B cell (primary cell): ENCODE measurements at regions of chr11 and their contacts with region 1.

Region 1: DNA sequence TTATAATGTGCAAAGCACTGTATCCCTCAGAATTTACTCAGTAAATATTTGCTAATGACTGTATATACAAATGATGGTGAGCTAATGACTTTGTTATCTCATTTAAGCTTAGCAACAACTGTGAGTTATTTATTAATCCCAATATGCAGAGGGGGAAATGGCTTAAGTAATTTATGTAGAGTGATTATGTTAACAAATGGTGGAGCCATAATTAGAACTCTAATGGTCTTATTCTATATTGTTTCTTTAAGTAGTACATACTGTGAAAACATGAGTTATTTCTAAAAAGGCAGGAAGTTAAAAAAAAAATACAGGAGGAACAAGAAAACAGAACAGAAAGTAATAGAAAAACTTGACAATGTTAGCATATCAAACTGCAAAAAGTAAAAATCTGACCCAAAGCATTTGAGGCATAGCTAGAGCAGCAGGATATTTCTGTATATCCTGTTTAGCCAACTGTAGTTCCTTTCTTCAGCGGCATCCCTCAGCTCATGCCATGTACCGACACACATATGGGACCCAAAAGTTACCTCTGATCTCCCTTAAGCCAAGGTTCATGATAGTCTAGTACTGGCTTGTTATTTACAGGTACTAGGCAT is 94.2 kb downstream of the FCHSD2 start:
- DNase-seq: peak; percentile 80
- ATAC-seq: peak; percentile 91
- H3K4me3 ChIP-seq: peak overlapping the region; percentile 14 to 52 (median 32)
- H3K4me3 Mint-ChIP-seq: peak overlapping the region; percentile 79
- H3K27ac ChIP-seq: peak overlapping the region; percentile 81 to 89
- H3K27ac Mint-ChIP-seq: peak overlapping the region; percentile 88
- H3K4me1 ChIP-seq: peaks cover 68 to 80% of the 10 kb centered on the region in 2 donors
- H3K4me1 Mint-ChIP-seq: peaks cover 66% of the 10 kb centered on the region
- H3K27me3 ChIP-seq: no peaks in the 10 kb centered on the region
- H3K27me3 Mint-ChIP-seq: no peaks in the 10 kb centered on the region
- CTCF ChIP-seq: no peak

Region 2: DNA sequence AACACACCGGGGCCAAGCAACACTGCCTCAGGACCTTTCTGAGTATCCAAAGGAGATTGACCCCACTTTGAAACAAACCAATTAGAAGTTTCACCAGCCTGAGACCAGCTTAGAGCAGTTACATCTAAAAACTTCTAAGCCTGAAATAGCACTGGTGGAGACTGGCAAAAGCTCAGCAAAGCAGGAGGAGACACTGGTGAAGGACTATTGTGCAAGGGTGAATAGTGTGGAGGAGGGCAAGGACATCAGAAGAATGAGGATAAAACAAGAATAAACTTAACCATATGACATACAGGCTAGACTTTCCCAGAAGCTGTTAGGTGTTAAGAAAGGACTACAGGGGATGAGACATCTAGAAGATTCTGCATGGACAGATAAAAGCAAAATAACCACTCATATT is 58.1 kb before region 1 on chr11:
- CTCF ChIA-PET with region 1: no interaction called
- POLR2A ChIA-PET with region 1: no interaction called
- intact Hi-C with region 1: no loop called
- DNase-seq: no peak
- ATAC-seq: no peak
- H3K4me3 ChIP-seq: no peak overlapping the region
- H3K4me3 Mint-ChIP-seq: no peak overlapping the region
- H3K27ac ChIP-seq: peak overlapping the region; percentile 5 to 75
- H3K27ac Mint-ChIP-seq: peak overlapping the region; percentile 32
- H3K4me1 ChIP-seq: peaks cover 12 to 26% of the 10 kb centered on the region in 2 donors
- H3K4me1 Mint-ChIP-seq: peaks cover 58% of the 10 kb centered on the region
- H3K27me3 ChIP-seq: no peaks in the 10 kb centered on the region
- H3K27me3 Mint-ChIP-seq: no peaks in the 10 kb centered on the region
- CTCF ChIP-seq: no peak

Region 3: GRCh38 chr11:73059915-73060314 is 12.0 kb after region 1 on chr11:
- CTCF ChIA-PET with region 1: interaction called, 6 read pairs
- POLR2A ChIA-PET with region 1: no interaction called
- intact Hi-C with region 1: loop called (anchors 2 kb)
- DNase-seq: no peak
- ATAC-seq: no peak
- H3K4me3 ChIP-seq: no peak overlapping the region
- H3K4me3 Mint-ChIP-seq: peak overlapping the region; percentile 12
- H3K27ac ChIP-seq: peak overlapping the region in 1 of 2 donors; percentile 76
- H3K27ac Mint-ChIP-seq: peak overlapping the region; percentile 60
- H3K4me1 ChIP-seq: peaks cover 53 to 82% of the 10 kb centered on the region in 2 donors
- H3K4me1 Mint-ChIP-seq: peaks cover 89% of the 10 kb centered on the region
- H3K27me3 ChIP-seq: no peaks in the 10 kb centered on the region
- H3K27me3 Mint-ChIP-seq: no peaks in the 10 kb centered on the region
- CTCF ChIP-seq: no peak

Region 4: DNA sequence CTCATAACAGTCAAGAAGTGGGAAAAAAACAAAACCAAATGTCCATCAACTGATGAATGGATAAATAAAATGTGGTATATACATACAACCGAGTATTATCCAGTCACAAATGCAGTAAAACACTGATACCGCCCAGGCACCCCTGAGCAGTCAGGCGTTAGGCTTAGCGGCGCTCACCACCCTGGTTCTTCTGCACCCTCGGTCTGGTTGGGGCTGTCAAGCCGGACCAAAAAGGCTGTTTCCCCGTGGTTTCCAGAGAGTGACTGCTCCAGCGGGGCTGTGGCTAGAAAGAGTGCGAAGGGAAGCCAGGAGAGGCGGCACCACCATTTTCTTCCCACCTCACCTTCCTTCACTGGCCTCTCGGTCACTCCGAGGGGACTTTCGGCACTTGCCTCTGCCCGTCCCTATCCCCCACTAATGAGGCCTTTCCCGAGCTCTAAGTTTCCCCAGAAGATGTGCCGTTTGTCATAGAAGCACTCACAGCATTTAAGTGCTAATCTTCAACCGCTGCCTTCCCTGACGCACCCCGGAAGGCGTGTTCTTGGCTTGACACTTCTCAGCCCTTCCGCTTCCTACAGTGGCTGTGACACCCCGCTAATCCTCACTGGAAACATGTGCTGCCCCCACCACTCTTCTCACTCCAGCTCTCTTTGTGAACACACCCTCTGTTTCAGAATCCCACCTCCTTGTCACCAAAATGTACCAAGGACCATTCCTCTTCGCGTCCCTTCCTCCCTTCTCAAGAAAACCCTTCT is 51.8 kb after region 1 on chr11:
- CTCF ChIA-PET with region 1: no interaction called
- POLR2A ChIA-PET with region 1: no interaction called
- intact Hi-C with region 1: no loop called
- DNase-seq: no peak
- ATAC-seq: no peak
- H3K4me3 ChIP-seq: no peak overlapping the region
- H3K4me3 Mint-ChIP-seq: peak overlapping the region; percentile 34
- H3K27ac ChIP-seq: peak overlapping the region in 1 of 2 donors; percentile 78
- H3K27ac Mint-ChIP-seq: peak overlapping the region; percentile 76
- H3K4me1 ChIP-seq: peaks cover 25 to 42% of the 10 kb centered on the region in 2 donors
- H3K4me1 Mint-ChIP-seq: peaks cover 76% of the 10 kb centered on the region
- H3K27me3 ChIP-seq: no peaks in the 10 kb centered on the region
- H3K27me3 Mint-ChIP-seq: no peaks in the 10 kb centered on the region
- CTCF ChIP-seq: no peak

Region 5: GRCh38 chr11:73124800-73125199 is 76.9 kb after region 1 on chr11:
- CTCF ChIA-PET with region 1: no interaction called
- POLR2A ChIA-PET with region 1: no interaction called
- intact Hi-C with region 1: no loop called
- DNase-seq: no peak
- ATAC-seq: no peak
- H3K4me3 ChIP-seq: no peak overlapping the region
- H3K4me3 Mint-ChIP-seq: no peak overlapping the region
- H3K27ac ChIP-seq: no peak overlapping the region
- H3K27ac Mint-ChIP-seq: peak overlapping the region; percentile 38
- H3K4me1 ChIP-seq: peaks cover 22 to 38% of the 10 kb centered on the region in 2 donors
- H3K4me1 Mint-ChIP-seq: peaks cover 50% of the 10 kb centered on the region
- H3K27me3 ChIP-seq: no peaks in the 10 kb centered on the region
- H3K27me3 Mint-ChIP-seq: no peaks in the 10 kb centered on the region
- CTCF ChIP-seq: no peak